Activated naive CD4-positive, alpha-beta T cell treated with anti-CD3 and anti-CD28 coated beads for 36 hours (primary cell): ENCODE measurements at regions of chr6 and their contacts with region 1.

Region 1: GRCh38 chr6:26439657-26440056 is 647 bp upstream of the BTN3A3 start:
- DNase-seq: no peak
- H3K4me3 Mint-ChIP-seq: peak overlapping the region; percentile 96
- H3K27ac Mint-ChIP-seq: peak overlapping the region; percentile 95
- H3K4me1 Mint-ChIP-seq: peaks cover 35% of the 10 kb centered on the region
- H3K27me3 Mint-ChIP-seq: no peaks in the 10 kb centered on the region

Region 2: GRCh38 chr6:26285143-26286134 is 154.2 kb before region 1 on chr6:
- CTCF ChIA-PET with region 1: no interaction called
- intact Hi-C with region 1: no loop called
- DNase-seq: peak; percentile 99
- H3K4me3 Mint-ChIP-seq: peak overlapping the region; percentile 93
- H3K27ac Mint-ChIP-seq: peak overlapping the region; percentile 100
- H3K4me1 Mint-ChIP-seq: peaks cover 16% of the 10 kb centered on the region
- H3K27me3 Mint-ChIP-seq: peaks cover 3% of the 10 kb centered on the region

Region 3: GRCh38 chr6:26363882-26364701 is 75.6 kb before region 1 on chr6:
- CTCF ChIA-PET with region 1: no interaction called
- intact Hi-C with region 1: loop called (anchors 1 kb)
- DNase-seq: peak; percentile 34
- H3K4me3 Mint-ChIP-seq: no peak overlapping the region
- H3K27ac Mint-ChIP-seq: no peak overlapping the region
- H3K4me1 Mint-ChIP-seq: peaks cover 51% of the 10 kb centered on the region
- H3K27me3 Mint-ChIP-seq: no peaks in the 10 kb centered on the region

Region 4: GRCh38 chr6:26457806-26458688 is 18.4 kb after region 1 on chr6 and contains the start of gene BTN2A1:
- CTCF ChIA-PET with region 1: interaction called, 8 read pairs
- intact Hi-C with region 1: loop called (anchors 1 kb)
- DNase-seq: peak; percentile 84
- H3K4me3 Mint-ChIP-seq: peak within 1 kb of the TSS; percentile 96
- H3K27ac Mint-ChIP-seq: peak within 1 kb of the TSS; percentile 96
- H3K4me1 Mint-ChIP-seq: peaks cover 48% of the 10 kb centered on the region
- H3K27me3 Mint-ChIP-seq: no peaks in the 10 kb centered on the region
- total RNA-seq, gene BTN2A1: 16.0 TPM

Region 5: DNA sequence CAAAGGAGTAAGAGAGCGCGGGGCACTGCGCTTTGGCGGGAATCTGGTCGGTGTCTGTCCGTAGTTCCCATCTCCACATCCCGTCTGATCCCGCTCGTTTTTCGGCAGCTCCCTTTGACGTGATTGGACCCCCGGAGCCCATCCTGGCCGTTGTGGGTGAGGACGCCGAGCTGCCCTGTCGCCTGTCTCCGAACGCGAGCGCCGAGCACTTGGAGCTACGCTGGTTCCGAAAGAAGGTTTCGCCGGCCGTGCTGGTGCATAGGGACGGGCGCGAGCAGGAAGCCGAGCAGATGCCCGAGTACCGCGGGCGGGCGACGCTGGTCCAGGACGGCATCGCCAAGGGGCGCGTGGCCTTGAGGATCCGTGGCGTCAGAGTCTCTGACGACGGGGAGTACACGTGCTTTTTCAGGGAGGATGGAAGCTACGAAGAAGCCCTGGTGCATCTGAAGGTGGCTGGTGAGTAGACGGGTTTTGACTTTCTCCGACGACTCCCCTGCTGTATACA is 61.9 kb after region 1 on chr6:
- CTCF ChIA-PET with region 1: no interaction called
- intact Hi-C with region 1: no loop called
- DNase-seq: peak; percentile 56
- H3K4me3 Mint-ChIP-seq: peak overlapping the region; percentile 73
- H3K27ac Mint-ChIP-seq: no peak overlapping the region
- H3K4me1 Mint-ChIP-seq: peaks cover 17% of the 10 kb centered on the region
- H3K27me3 Mint-ChIP-seq: peaks cover 32% of the 10 kb centered on the region

Region 6: GRCh38 chr6:26520853-26521599 is 81.4 kb after region 1 on chr6:
- CTCF ChIA-PET with region 1: no interaction called
- intact Hi-C with region 1: loop called (anchors 5 kb)
- DNase-seq: peak; percentile 90
- H3K4me3 Mint-ChIP-seq: peak overlapping the region; percentile 76
- H3K27ac Mint-ChIP-seq: peak overlapping the region; percentile 94
- H3K4me1 Mint-ChIP-seq: peaks cover 27% of the 10 kb centered on the region
- H3K27me3 Mint-ChIP-seq: peaks cover 2% of the 10 kb centered on the region